Caki2 (cell line): ENCODE measurements at regions of chr14 and their contacts with region 1.

Region 1: GRCh38 chr14:49659526-49660455 is 24.7 kb upstream of the DNAAF2 start:
- DNase-seq: no peak

Region 2: GRCh38 chr14:49770212-49770817 is 110.5 kb after region 1 on chr14:
- in situ Hi-C with region 1: loop called (anchors 10 kb)
- DNase-seq: peak; percentile 96